Left ventricle myocardium superior (tissue), 1 donor: ENCODE measurements at regions of chr16 and their contacts with region 1.

Region 1: GRCh38 chr16:73196670-73197069 is 148.7 kb upstream of the ZFHX3 start:
- DNase-seq: peak; percentile 69
- ATAC-seq: peak; percentile 94

Region 2: GRCh38 chr16:72501739-72502593 is 694.7 kb before region 1 on chr16:
- intact Hi-C with region 1: loop called (anchors 10 kb)
- DNase-seq: peak; percentile 49
- ATAC-seq: peak; percentile 62

Region 3: DNA sequence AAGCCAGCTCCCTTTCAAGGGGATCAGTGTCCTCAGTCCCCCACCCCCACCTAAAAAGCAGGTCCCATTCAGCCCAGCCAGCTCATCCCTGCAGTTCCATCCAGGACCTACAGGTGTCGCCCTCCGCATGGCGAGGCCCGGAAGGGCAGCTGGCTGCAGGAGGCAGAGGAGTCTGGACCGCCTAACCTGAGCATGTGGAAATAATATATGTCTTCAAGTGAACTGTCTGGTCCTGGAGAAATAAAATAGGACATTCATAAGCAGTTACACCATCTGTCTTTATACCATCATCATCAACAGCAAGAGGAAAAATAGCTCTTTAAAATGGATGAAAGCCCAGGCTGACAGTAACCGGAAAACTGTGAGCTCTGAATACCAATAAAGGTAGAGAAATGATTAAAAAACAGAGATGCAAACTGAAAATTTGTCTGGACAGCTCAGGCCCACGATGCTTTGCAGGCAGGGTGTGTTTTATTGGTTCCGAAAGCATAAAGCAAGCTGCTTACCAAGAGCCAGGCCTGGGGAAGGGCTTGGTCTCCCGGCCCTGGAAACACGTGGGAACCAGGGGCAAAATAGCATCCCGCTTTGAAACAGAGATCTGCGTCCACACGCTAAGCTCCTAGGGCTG is 363.9 kb before region 1 on chr16:
- intact Hi-C with region 1: loop called (anchors 10 kb)
- DNase-seq: peak; percentile 91
- ATAC-seq: peak; percentile 94

Region 4: DNA sequence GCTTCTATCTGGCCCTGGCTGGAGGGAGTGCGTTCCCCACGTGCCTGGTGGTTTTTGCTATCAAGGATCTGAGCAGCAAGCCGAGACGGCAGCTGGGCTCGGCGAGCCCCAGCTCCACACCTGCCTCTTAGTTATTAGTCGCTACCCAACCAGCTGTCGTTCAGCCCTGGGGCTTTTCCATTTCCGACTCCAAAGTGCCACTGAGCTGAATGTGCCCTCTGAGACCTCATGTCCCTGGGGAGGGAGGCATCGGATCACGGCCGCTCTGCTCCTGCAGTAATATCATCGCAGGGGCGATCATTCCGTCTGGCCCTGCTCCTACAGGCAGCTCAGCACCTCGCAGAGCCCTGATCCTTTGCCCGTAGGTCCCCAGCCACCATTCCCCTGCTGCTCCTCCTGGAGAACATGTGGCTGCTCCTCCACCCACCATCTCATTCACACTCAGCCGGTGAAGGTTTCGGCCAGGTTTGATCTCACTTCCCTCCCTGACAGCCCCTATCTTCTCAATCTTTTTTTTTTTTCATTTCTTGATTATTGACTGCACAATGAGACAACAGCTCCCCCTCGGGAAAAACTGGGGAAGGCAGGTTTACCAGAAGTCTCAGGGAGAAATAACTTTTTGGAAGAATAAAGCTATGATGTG is 235.4 kb before region 1 on chr16:
- intact Hi-C with region 1: no loop called
- DNase-seq: no peak
- ATAC-seq: peak; percentile 27

Region 5: DNA sequence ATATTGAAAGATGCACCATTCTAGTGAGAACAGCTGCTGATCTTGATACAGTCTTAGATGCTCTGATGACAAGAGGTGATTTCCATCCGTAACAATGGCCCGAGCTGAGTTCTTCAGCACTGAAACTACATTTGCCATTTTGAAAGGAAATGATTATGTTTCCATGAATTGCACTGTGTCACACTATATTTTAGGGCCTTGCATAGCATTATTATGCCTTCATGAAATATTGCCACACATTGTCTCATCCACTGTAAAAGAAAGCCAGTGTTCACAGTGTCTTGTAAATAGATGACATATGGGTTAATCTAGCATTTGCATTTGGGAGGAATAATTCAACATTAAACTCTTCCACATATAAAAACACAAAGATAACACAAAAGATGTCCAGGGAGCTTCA is 661.7 kb after region 1 on chr16:
- intact Hi-C with region 1: no loop called
- DNase-seq: no peak
- ATAC-seq: no peak